HepG2 (cell line): ENCODE measurements at regions of chr2 and their contacts with region 1.

Region 1: DNA sequence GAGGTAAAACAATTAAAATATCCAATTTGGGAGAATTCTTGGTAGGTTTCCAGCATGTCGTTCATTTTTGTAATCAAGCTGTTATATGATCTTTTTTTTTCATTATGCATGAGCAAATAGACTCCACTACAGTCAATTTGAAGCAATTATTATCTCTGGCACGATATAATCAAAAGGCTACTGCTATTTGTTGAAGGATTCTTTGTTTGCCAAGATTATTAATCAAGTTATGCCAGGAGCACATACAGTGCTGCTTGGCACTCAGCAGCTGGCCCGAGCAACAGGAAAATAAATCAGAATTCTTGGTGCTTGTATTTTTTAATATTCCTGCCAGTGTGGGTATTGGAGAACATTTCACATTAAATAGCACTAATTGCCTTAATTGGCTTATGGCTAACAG is 279.5 kb downstream of the RND3 start:
- DNase-seq: no peak
- ATAC-seq: no peak
- H3K4me3 ChIP-seq: no peak overlapping the region
- H3K27ac ChIP-seq: no peak overlapping the region
- H3K4me1 ChIP-seq: no peaks in the 10 kb centered on the region
- H3K27me3 ChIP-seq: no peaks in the 10 kb centered on the region
- CTCF ChIP-seq: no peak
- EP300 ChIP-seq: no peak
- POLR2A ChIP-seq: no peak
- RAD21 ChIP-seq: no peak

Region 2: DNA sequence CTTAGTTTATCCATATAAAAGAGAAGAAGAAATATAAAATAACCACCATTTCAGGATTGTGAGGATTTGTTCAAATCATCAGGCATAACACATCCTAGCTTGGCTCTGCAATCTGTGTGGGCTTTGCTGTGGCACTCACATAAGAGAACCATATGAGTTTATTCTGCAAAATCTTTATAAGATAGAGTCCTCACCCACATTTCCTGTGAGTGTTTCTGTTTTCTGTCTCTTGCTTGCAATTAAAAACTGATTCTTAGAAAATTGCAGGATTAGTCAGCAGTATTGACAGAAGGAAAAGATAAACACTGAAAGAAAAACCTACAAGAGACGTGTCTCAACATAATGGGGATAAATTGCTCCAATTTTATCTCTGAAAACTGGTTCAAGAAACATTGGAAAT is 21.0 kb after region 1 on chr2:
- CTCF ChIA-PET with region 1: no interaction called
- POLR2A ChIA-PET with region 1: no interaction called
- in situ Hi-C with region 1: no loop called
- intact Hi-C with region 1: loop called (anchors 1 kb)
- DNase-seq: no peak
- ATAC-seq: no peak
- H3K4me3 ChIP-seq: no peak overlapping the region
- H3K27ac ChIP-seq: no peak overlapping the region
- H3K4me1 ChIP-seq: no peaks in the 10 kb centered on the region
- H3K27me3 ChIP-seq: no peaks in the 10 kb centered on the region
- CTCF ChIP-seq: no peak
- EP300 ChIP-seq: no peak
- POLR2A ChIP-seq: no peak
- RAD21 ChIP-seq: no peak

Region 3: GRCh38 chr2:150296770-150297546 is 89.0 kb after region 1 on chr2:
- CTCF ChIA-PET with region 1: no interaction called
- POLR2A ChIA-PET with region 1: no interaction called
- in situ Hi-C with region 1: no loop called
- intact Hi-C with region 1: no loop called
- DNase-seq: no peak
- ATAC-seq: no peak
- H3K4me3 ChIP-seq: no peak overlapping the region
- H3K27ac ChIP-seq: no peak overlapping the region
- H3K4me1 ChIP-seq: no peaks in the 10 kb centered on the region
- H3K27me3 ChIP-seq: no peaks in the 10 kb centered on the region
- CTCF ChIP-seq: no peak
- EP300 ChIP-seq: no peak
- POLR2A ChIP-seq: no peak
- RAD21 ChIP-seq: no peak

Region 4: GRCh38 chr2:150376565-150377335 is 168.8 kb after region 1 on chr2:
- CTCF ChIA-PET with region 1: no interaction called
- POLR2A ChIA-PET with region 1: no interaction called
- in situ Hi-C with region 1: no loop called
- intact Hi-C with region 1: no loop called
- DNase-seq: peak; percentile 25
- ATAC-seq: peak; percentile 45; the same call in 2 of the 3 replicates
- H3K4me3 ChIP-seq: no peak overlapping the region
- H3K27ac ChIP-seq: no peak overlapping the region
- H3K4me1 ChIP-seq: no peaks in the 10 kb centered on the region
- H3K27me3 ChIP-seq: no peaks in the 10 kb centered on the region
- CTCF ChIP-seq: no peak
- EP300 ChIP-seq: no peak
- POLR2A ChIP-seq: no peak
- RAD21 ChIP-seq: no peak